Activated CD4-positive, alpha-beta memory T cell treated with anti-CD3 and anti-CD28 coated beads for 36 hours (primary cell): ENCODE measurements at regions of chr7 and their contacts with region 1.

Region 1: DNA sequence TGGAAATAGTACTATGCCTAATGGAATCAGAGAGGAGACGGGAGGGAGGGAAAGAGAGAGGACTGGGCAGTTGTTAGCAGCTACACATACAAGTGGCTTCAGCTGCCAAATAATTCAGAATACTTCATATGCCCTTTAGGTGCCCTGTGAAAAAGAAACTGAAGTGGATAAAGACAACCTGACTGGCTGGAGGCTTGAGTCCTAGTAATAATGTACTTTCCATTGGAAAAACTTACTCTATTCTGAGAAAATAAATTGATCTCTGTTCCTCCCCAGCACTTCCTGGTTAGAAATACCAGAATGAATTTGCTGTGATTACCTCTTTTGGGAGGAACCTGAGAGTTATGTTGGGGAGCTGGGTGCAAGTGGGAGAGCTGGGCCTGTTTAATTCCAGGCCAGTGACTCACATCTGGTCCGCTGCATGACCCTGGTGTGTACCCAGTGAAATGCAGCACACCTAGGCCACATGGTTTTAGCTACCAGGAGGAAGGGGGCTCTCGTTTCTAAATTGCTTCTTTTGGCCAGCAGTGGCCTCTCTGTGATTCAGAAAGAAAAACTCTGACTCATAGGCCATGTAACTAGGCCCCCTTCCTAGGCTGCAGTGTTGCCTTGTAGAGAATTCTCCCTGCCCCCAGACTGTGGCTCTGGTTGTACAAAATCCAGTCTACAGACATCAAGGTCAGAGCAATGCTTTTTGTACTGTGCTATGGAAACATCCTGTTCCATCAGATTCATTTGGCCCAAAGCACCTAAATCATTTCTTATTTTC is 6.5 kb downstream of the AGFG2 start:
- DNase-seq: peak; percentile 85
- H3K4me3 Mint-ChIP-seq: peak overlapping the region; percentile 72
- H3K27ac Mint-ChIP-seq: peak overlapping the region; percentile 98
- H3K4me1 Mint-ChIP-seq: peaks cover 94% of the 10 kb centered on the region
- H3K27me3 Mint-ChIP-seq: no peaks in the 10 kb centered on the region

Region 2: GRCh38 chr7:99380032-99380822 is 1165.3 kb before region 1 on chr7:
- CTCF ChIA-PET with region 1: no interaction called
- POLR2A ChIA-PET with region 1: no interaction called
- intact Hi-C with region 1: loop called (anchors 2 kb)
- DNase-seq: peak; percentile 68
- H3K4me3 Mint-ChIP-seq: peak overlapping the region; percentile 81
- H3K27ac Mint-ChIP-seq: peak overlapping the region; percentile 97
- H3K4me1 Mint-ChIP-seq: peaks cover 66% of the 10 kb centered on the region
- H3K27me3 Mint-ChIP-seq: no peaks in the 10 kb centered on the region

Region 3: DNA sequence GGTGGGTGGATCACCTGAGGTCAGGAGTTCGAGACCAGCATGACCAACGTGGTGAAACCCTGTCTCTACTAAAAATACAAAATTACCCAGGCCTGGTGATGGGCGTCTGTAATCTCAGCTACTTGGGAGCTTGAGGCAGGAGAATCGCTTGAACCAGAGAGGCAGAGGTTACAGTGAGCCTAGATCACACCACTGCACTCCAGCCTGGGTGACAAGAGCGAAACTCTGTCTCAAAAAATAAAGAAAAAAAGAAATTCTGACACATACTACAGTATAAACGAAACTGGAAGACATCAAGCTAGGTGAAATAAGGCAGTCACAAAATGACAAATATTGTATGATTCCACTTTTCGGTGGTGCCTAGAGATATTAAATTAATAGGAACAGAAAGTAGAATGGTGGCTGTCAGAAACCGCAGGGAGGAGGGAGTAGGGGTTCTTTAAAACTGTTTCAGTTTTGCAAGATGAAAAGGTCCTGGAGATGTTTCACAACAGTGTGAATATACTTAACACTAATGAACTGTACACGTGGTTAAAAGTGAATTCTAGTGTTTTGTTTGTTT is 149.0 kb before region 1 on chr7:
- CTCF ChIA-PET with region 1: no interaction called
- POLR2A ChIA-PET with region 1: interaction called, 4 read pairs
- intact Hi-C with region 1: loop called (anchors 1 kb)
- DNase-seq: peak; percentile 78
- H3K4me3 Mint-ChIP-seq: no peak overlapping the region
- H3K27ac Mint-ChIP-seq: no peak overlapping the region
- H3K4me1 Mint-ChIP-seq: peaks cover 26% of the 10 kb centered on the region
- H3K27me3 Mint-ChIP-seq: peaks cover 24% of the 10 kb centered on the region

Region 4: DNA sequence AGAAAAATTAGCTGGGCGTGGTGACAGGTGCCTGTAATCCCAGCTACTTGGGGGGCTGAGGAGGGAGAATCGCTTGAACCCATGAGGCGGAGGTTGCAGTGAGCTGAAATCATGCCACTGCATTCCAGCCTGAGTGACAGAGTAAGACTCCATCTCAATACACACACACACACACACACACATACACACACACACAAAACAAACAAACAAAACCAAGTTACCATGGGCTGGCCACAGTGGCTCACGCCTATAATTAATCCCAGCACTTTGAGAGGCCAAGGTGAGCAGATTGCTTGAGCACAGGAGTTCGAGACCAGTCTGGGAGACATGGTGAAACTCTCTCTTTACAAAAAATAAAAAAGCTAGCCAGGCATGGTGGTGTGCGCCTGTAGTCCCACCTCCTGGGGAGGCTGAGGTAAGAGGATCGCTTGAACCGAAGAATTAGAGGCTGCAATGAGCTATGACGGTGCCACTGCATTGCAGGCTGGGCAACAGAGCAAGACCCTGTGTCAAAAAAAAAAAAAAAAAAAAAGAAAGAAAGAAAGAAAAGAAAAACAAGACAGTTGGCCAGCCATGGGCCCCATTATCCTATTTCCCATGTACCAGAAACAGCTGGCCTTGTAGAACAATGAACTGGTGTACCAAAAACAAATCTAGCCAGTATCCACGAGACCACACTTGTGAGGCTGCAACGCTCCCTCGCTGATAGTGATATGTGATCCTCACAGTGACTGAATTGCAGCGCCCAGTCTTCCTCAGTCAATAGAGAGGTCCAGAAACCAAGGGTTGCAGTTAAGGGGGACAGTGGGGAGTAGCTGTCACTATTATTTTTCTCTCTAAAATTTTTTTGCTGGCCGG is 13.2 kb before region 1 on chr7:
- CTCF ChIA-PET with region 1: interaction called, 6 read pairs
- POLR2A ChIA-PET with region 1: interaction called, 5 read pairs
- intact Hi-C with region 1: loop called (anchors 1 kb)
- DNase-seq: no peak
- H3K4me3 Mint-ChIP-seq: no peak overlapping the region
- H3K27ac Mint-ChIP-seq: no peak overlapping the region
- H3K4me1 Mint-ChIP-seq: peaks cover 8% of the 10 kb centered on the region
- H3K27me3 Mint-ChIP-seq: no peaks in the 10 kb centered on the region

Region 5: DNA sequence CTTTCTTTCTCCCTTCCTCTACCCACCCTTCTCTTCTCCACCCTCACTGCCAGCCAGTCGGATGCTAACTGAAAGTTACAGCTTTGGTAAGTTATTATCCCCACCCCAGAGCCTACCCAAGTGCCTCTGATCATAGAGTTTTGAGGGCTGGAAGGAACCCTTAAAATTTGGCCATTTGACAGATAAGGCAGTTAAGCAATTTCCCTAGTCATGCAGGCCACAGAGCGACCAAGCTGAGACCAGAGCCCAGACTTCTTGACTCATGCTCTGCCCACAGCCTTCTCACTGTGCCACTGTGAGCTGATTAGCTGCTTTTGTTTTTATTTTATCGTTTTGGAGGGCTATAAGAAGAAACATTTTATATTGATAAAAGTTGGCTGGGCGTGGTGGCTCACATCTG is 11.0 kb after region 1 on chr7:
- CTCF ChIA-PET with region 1: interaction called, 132 read pairs
- POLR2A ChIA-PET with region 1: interaction called, 5 read pairs
- intact Hi-C with region 1: loop called (anchors 1 kb)
- DNase-seq: no peak
- H3K4me3 Mint-ChIP-seq: no peak overlapping the region
- H3K27ac Mint-ChIP-seq: no peak overlapping the region
- H3K4me1 Mint-ChIP-seq: peaks cover 11% of the 10 kb centered on the region
- H3K27me3 Mint-ChIP-seq: no peaks in the 10 kb centered on the region

Region 6: GRCh38 chr7:100563809-100564400 is 18.4 kb after region 1 on chr7:
- CTCF ChIA-PET with region 1: interaction called, 132 read pairs
- POLR2A ChIA-PET with region 1: interaction called, 5 read pairs
- intact Hi-C with region 1: loop called (anchors 1 kb)
- DNase-seq: peak; percentile 86
- H3K4me3 Mint-ChIP-seq: no peak overlapping the region
- H3K27ac Mint-ChIP-seq: no peak overlapping the region
- H3K4me1 Mint-ChIP-seq: peaks cover 18% of the 10 kb centered on the region
- H3K27me3 Mint-ChIP-seq: no peaks in the 10 kb centered on the region

Region 7: DNA sequence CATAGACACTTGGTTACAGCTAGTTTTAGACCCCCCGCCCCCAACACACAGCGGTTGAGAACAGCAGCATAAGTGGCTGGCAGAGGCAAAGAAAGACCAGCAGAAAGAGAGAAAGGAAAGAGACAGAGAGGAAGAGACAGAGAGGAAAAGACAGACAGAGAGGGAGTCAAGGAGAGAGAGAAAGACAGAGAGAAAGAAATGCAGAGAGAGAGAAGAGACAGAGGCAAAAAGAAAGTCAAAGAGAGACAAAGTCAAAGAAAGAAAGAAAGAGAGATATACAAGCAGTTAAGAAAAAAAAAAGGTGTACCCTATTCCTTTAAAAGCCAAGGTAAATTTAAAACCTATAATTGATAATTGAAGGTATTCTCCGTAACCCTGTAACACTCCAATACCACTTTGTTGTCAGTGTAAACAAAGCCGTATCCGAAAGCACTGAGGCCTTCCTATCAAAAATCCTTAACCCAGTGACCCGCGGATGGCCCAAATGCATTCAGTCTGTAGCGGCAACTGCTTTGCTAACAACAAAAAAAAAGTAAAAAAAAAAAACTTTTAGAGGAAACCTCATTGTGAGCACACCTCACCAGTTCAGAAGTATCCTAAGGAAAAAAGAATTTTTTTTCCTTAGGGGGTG is 295.0 kb after region 1 on chr7:
- CTCF ChIA-PET with region 1: no interaction called
- POLR2A ChIA-PET with region 1: no interaction called
- intact Hi-C with region 1: no loop called
- DNase-seq: no peak
- H3K4me3 Mint-ChIP-seq: no peak overlapping the region
- H3K27ac Mint-ChIP-seq: no peak overlapping the region
- H3K4me1 Mint-ChIP-seq: peaks cover 10% of the 10 kb centered on the region
- H3K27me3 Mint-ChIP-seq: no peaks in the 10 kb centered on the region